Activated CD4-positive, alpha-beta T cell treated with anti-CD3 and anti-CD28 coated beads for 36 hours (primary cell): ENCODE measurements at regions of chr12 and their contacts with region 1.

Region 1: GRCh38 chr12:31749024-31749704 is 20.3 kb upstream of the AMN1 start:
- DNase-seq: peak; percentile 81
- ATAC-seq: peak; percentile 92
- H3K4me3 Mint-ChIP-seq: peak overlapping the region; percentile 9
- H3K27ac Mint-ChIP-seq: peak overlapping the region; percentile 28
- H3K4me1 Mint-ChIP-seq: peaks cover 55% of the 10 kb centered on the region
- H3K27me3 Mint-ChIP-seq: no peaks in the 10 kb centered on the region

Region 2: DNA sequence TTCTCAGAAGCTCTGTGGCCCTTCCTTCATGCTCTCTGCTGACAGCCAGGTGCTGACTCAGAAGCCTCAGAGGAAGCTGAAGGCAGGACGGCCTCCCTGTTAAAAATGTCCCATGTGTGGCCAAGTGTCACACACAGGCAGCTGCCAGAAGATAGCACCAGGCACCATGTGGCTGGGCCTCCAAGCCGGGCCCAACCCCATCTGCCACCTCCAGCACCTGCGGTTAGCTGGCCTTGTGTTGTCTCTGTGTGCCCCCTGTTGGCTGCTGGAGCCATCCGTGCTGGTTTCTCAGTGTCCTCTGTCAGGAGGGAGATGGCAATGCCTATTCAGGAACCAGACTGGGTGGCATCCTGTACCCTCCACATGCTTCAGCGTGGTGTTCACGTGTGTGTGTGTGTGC is 759.4 kb before region 1 on chr12:
- CTCF ChIA-PET with region 1: no interaction called
- POLR2A ChIA-PET with region 1: no interaction called
- intact Hi-C with region 1: no loop called
- DNase-seq: peak; percentile 53
- ATAC-seq: peak; percentile 45
- H3K4me3 Mint-ChIP-seq: no peak overlapping the region
- H3K27ac Mint-ChIP-seq: no peak overlapping the region
- H3K4me1 Mint-ChIP-seq: no peaks in the 10 kb centered on the region
- H3K27me3 Mint-ChIP-seq: no peaks in the 10 kb centered on the region

Region 3: DNA sequence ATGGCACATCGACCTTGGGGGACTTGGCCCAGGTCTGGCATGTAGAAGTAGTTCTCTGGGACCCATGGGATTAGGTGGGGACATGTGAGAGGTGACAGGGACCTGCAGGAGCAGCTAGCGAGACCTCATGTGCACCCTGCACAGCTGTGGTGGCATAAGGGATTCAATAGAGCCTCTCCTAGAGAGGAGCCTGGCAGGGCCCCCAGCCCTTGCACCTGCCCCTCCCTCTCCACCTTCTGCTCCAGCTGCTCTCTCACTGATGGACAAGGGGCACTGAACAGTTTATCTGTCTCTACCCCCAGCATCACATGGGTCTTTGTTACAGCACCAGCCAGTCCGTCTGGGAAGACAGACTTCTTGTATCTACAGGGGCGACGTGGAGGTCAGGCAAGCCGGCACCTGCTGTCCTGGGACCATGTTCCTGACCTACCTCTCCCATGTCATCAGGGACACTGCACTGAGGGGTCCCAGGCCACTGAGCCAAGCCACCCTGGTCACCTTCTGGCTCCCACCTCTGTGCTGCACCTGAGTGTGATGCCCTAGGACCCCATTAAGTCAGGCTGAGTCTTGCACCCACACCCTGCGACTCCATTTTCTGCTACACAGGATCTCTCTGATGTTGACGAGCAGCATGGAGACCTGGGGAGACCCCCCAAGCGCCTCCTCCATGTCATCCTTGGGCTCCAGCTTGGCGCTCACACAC is 642.9 kb before region 1 on chr12:
- CTCF ChIA-PET with region 1: no interaction called
- POLR2A ChIA-PET with region 1: no interaction called
- intact Hi-C with region 1: no loop called
- DNase-seq: no peak
- ATAC-seq: no peak
- H3K4me3 Mint-ChIP-seq: no peak overlapping the region
- H3K27ac Mint-ChIP-seq: no peak overlapping the region
- H3K4me1 Mint-ChIP-seq: no peaks in the 10 kb centered on the region
- H3K27me3 Mint-ChIP-seq: peaks cover 2% of the 10 kb centered on the region

Region 4: DNA sequence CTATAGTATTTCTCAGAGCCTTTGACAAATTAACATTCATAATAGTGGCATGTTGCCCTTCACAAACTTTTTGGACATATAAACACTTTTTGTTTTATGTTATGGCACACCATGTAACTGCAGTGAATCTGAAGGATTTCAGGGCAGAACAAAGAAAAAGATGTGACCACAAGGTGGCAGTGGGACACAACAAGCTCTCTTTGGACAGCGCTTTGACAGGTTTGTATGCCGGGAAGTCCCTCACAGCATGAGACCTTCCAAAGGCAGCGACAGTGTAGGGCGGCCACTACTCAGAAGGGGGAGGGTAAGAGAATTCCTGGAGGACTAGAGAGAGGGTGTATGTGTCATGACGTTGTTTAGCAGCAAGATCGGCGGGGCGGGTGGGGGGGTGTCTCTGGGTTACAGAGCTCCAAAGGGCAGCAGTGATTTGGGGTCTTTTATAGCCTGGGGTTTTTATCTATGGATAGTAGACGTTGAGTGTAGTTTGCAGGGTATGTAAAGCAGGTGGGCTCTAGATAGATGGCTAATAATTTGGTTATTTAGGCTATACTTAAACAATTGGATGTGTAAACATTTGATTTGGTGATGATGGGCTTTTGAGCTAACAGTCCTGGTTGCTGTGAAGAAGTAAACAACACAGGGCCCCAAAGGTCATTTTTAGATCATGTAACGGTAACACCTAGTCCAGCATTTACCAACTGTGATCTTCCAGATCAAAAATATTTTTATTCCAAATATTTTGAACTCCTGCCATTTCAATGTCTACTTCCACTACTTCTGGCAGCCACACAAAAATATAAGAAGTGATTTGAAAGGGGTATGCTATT is 66.8 kb before region 1 on chr12:
- CTCF ChIA-PET with region 1: interaction called, 3 read pairs
- POLR2A ChIA-PET with region 1: no interaction called
- intact Hi-C with region 1: loop called in 1 of 2 experiments (anchors 1 kb)
- DNase-seq: peak; percentile 76
- ATAC-seq: peak; percentile 95
- H3K4me3 Mint-ChIP-seq: no peak overlapping the region
- H3K27ac Mint-ChIP-seq: peak overlapping the region; percentile 53
- H3K4me1 Mint-ChIP-seq: peaks cover 6% of the 10 kb centered on the region
- H3K27me3 Mint-ChIP-seq: no peaks in the 10 kb centered on the region

Region 5: GRCh38 chr12:31736472-31736871 is 12.7 kb before region 1 on chr12:
- CTCF ChIA-PET with region 1: interaction called, 6 read pairs
- POLR2A ChIA-PET with region 1: interaction called, 7 read pairs
- intact Hi-C with region 1: loop called (anchors 1 kb)
- DNase-seq: peak; percentile 82
- ATAC-seq: peak; percentile 82
- H3K4me3 Mint-ChIP-seq: no peak overlapping the region
- H3K27ac Mint-ChIP-seq: peak overlapping the region; percentile 83
- H3K4me1 Mint-ChIP-seq: peaks cover 60% of the 10 kb centered on the region
- H3K27me3 Mint-ChIP-seq: no peaks in the 10 kb centered on the region

Region 6: DNA sequence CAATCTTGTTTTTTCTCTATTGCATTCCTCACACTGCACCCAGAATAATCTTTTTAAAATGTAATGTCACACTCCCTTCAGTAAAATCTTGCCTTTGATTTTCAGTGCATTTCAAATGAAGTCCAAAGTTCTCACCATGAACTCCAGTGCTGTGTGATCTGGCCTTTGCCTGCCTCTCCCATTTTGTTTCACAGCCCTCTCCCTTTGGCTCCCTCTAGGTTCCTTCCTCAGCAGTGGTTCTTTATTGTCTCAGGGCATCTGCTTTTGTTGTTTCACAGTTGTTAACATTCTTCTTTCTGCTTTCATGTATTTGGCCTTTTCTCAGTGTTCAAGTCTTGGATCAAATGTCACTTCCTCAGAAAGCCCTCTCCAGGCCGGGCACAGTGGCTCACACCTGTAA is 64.1 kb after region 1 on chr12:
- CTCF ChIA-PET with region 1: no interaction called
- POLR2A ChIA-PET with region 1: no interaction called
- intact Hi-C with region 1: loop called in 1 of 2 experiments (anchors 2 kb)
- DNase-seq: no peak
- ATAC-seq: no peak
- H3K4me3 Mint-ChIP-seq: no peak overlapping the region
- H3K27ac Mint-ChIP-seq: no peak overlapping the region
- H3K4me1 Mint-ChIP-seq: peaks cover 17% of the 10 kb centered on the region
- H3K27me3 Mint-ChIP-seq: no peaks in the 10 kb centered on the region

Region 7: DNA sequence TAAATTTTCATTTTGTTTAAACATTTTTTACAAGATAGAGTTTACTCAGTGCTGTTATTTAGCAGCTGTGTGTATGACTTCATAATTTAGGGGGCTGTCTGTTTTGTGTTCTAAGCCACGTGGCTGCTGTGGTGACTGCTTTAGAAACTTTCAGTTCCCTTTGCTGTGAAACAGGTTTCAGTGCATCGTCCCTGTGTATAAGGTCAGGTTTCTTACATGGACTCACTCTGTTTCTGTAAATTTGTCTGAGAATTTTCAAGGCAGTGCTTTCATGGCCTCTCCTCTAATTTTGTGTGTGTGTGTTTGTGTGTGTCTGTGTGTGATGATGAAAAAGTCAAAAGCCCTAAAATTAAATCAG is 389.9 kb after region 1 on chr12:
- CTCF ChIA-PET with region 1: no interaction called
- POLR2A ChIA-PET with region 1: no interaction called
- intact Hi-C with region 1: loop called (anchors 1 to 5 kb)
- DNase-seq: peak; percentile 73
- ATAC-seq: peak; percentile 64
- H3K4me3 Mint-ChIP-seq: peak overlapping the region; percentile 66
- H3K27ac Mint-ChIP-seq: peak overlapping the region; percentile 28
- H3K4me1 Mint-ChIP-seq: peaks cover 28% of the 10 kb centered on the region
- H3K27me3 Mint-ChIP-seq: peaks cover 11% of the 10 kb centered on the region

Region 8: GRCh38 chr12:32586390-32586789 is 837.2 kb after region 1 on chr12:
- CTCF ChIA-PET with region 1: no interaction called
- POLR2A ChIA-PET with region 1: no interaction called
- intact Hi-C with region 1: loop called in 1 of 2 experiments (anchors 10 kb)
- DNase-seq: no peak
- ATAC-seq: no peak
- H3K4me3 Mint-ChIP-seq: no peak overlapping the region
- H3K27ac Mint-ChIP-seq: no peak overlapping the region
- H3K4me1 Mint-ChIP-seq: peaks cover 47% of the 10 kb centered on the region
- H3K27me3 Mint-ChIP-seq: no peaks in the 10 kb centered on the region